CD8-positive, alpha-beta T cell (primary cell): ENCODE measurements at regions of chr18 and their contacts with region 1.

Region 1: DNA sequence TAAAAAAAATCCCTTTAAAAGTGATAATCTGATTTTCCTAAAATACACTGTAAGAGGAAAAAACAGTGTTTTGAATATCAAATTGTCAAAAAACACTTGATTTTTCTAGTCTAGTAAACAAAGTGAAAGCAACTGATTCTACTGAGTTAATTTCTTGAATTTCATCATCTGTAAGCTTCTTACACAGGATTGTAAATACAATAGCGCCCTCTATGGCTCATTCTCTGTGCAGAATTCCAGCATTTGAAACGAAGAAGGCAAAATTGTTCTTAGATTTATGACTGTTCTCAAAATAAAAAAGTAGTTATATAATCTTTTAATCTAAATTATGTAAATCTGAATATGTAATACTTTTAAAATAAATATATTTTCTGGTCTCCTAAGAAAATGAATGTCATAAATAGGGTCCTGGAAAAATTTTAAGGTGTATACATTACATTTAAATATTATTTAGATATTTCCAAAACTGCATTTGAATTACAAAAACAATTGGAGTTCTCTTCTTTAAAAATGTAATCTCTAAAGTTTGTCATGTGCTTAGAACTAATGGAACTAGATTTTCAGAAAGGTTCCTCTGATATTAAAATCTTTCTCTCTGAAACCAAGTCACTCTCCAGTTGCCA is 176.9 kb upstream of the MC4R start:
- DNase-seq: peak in 2 of 9 experiments; percentile 13 to 30
- ATAC-seq: no peak
- H3K4me3 ChIP-seq: no peak overlapping the region
- H3K4me3 Mint-ChIP-seq: no peak overlapping the region
- H3K27ac ChIP-seq: no peak overlapping the region
- H3K27ac Mint-ChIP-seq: no peak overlapping the region
- H3K4me1 ChIP-seq: no peaks in the 10 kb centered on the region
- H3K4me1 Mint-ChIP-seq: no peaks in the 10 kb centered on the region
- H3K27me3 ChIP-seq: no peaks in the 10 kb centered on the region
- H3K27me3 Mint-ChIP-seq: no peaks in the 10 kb centered on the region
- CTCF ChIP-seq: peak; percentile 48

Region 2: GRCh38 chr18:58806826-58807714 is 1742.4 kb before region 1 on chr18:
- CTCF ChIA-PET with region 1: no interaction called
- POLR2A ChIA-PET with region 1: no interaction called
- intact Hi-C with region 1: no loop called
- DNase-seq: no peak
- ATAC-seq: no peak
- H3K4me3 ChIP-seq: no peak overlapping the region
- H3K4me3 Mint-ChIP-seq: no peak overlapping the region
- H3K27ac ChIP-seq: no peak overlapping the region
- H3K27ac Mint-ChIP-seq: no peak overlapping the region
- H3K4me1 ChIP-seq: no peaks in the 10 kb centered on the region
- H3K4me1 Mint-ChIP-seq: no peaks in the 10 kb centered on the region
- H3K27me3 ChIP-seq: no peaks in the 10 kb centered on the region
- H3K27me3 Mint-ChIP-seq: peaks cover 42% of the 10 kb centered on the region
- CTCF ChIP-seq: no peak

Region 3: GRCh38 chr18:59308248-59308937 is 1241.1 kb before region 1 on chr18:
- CTCF ChIA-PET with region 1: no interaction called
- POLR2A ChIA-PET with region 1: no interaction called
- intact Hi-C with region 1: loop called in 1 of 2 experiments (anchors 10 kb)
- DNase-seq: peak; percentile 30 to 76 (median 61)
- ATAC-seq: peak; percentile 84
- H3K4me3 ChIP-seq: peak overlapping the region in 1 of 2 experiments; percentile 29
- H3K4me3 Mint-ChIP-seq: peak overlapping the region; percentile 67
- H3K27ac ChIP-seq: no peak overlapping the region
- H3K27ac Mint-ChIP-seq: no peak overlapping the region
- H3K4me1 ChIP-seq: peaks cover 5% of the 10 kb centered on the region
- H3K4me1 Mint-ChIP-seq: no peaks in the 10 kb centered on the region
- H3K27me3 ChIP-seq: peaks cover 0 to 5% of the 10 kb centered on the region in 2 experiments
- H3K27me3 Mint-ChIP-seq: peaks cover 45% of the 10 kb centered on the region
- CTCF ChIP-seq: peak; percentile 76

Region 4: DNA sequence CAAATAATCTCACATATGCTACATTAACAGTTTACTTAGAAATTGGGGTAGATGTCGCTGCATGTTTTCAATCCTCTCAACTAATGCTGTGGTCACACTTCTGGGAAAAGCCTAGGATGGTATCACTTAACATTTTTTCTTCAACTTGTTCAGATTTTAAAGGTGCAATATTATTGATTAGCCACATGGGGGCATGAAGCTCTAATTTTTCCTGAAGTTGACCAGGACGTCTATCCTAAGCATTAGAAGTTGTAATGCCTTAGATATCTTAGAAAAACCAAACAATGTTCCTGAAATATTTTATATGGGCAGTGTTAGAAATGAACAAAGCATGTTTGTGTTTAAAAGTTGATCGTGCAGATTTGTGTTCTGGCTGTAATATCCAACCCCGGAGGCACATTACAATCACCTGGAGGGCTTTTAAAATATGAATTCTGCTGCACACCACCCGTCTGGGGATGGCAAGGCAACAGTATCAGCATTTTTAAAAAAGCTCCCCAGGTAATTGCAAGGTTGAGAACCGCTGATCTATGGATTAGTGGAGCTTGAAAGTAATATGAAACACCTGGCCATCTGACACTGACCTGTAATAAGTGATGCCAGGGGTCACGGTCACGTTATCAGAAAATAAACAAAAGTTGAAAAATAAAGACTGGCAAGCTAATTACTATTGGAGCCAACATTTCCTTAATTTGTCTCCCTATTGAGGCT is 1089.9 kb before region 1 on chr18:
- CTCF ChIA-PET with region 1: no interaction called
- POLR2A ChIA-PET with region 1: no interaction called
- intact Hi-C with region 1: loop called in 1 of 2 experiments (anchors 5 kb)
- DNase-seq: peak in 1 of 9 experiments; percentile 5
- ATAC-seq: no peak
- H3K4me3 ChIP-seq: no peak overlapping the region
- H3K4me3 Mint-ChIP-seq: no peak overlapping the region
- H3K27ac ChIP-seq: no peak overlapping the region
- H3K27ac Mint-ChIP-seq: no peak overlapping the region
- H3K4me1 ChIP-seq: no peaks in the 10 kb centered on the region
- H3K4me1 Mint-ChIP-seq: no peaks in the 10 kb centered on the region
- H3K27me3 ChIP-seq: no peaks in the 10 kb centered on the region
- H3K27me3 Mint-ChIP-seq: peaks cover 18% of the 10 kb centered on the region
- CTCF ChIP-seq: peak; percentile 54

Region 5: DNA sequence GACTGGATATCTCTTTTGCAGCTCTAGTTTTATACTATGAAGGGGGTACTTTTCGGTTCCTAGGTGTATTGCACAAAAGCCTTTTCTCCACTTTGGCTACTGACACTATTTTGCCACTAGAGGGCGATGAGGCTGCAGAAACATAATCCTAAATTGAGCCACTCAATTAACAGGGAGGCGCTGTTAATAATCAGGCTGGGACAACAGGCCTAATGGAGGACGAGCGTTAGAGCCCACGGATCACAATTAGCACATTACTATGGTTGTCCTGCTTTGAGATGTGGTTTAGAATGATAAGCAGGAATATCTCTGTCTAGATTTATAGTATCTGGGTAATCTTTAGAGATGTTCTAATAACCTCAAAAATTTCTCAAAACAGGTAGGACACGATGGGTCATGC is 711.9 kb before region 1 on chr18:
- CTCF ChIA-PET with region 1: no interaction called
- POLR2A ChIA-PET with region 1: no interaction called
- intact Hi-C with region 1: loop called in 1 of 2 experiments (anchors 2 kb)
- DNase-seq: peak in 7 of 9 experiments; percentile 24 to 70 (median 46)
- ATAC-seq: no peak
- H3K4me3 ChIP-seq: no peak overlapping the region
- H3K4me3 Mint-ChIP-seq: no peak overlapping the region
- H3K27ac ChIP-seq: no peak overlapping the region
- H3K27ac Mint-ChIP-seq: no peak overlapping the region
- H3K4me1 ChIP-seq: no peaks in the 10 kb centered on the region
- H3K4me1 Mint-ChIP-seq: no peaks in the 10 kb centered on the region
- H3K27me3 ChIP-seq: no peaks in the 10 kb centered on the region
- H3K27me3 Mint-ChIP-seq: peaks cover 4% of the 10 kb centered on the region
- CTCF ChIP-seq: peak; percentile 91